GM12878 (cell line): ENCODE measurements at regions of chr7 and their contacts with region 1.

Region 1: GRCh38 chr7:128443831-128444600 is 11.7 kb upstream of the HILPDA start:
- DNase-seq: no peak
- ATAC-seq: peak; percentile 42
- H3K4me3 ChIP-seq: no peak overlapping the region
- H3K27ac ChIP-seq: no peak overlapping the region
- H3K4me1 ChIP-seq: peaks cover 9% of the 10 kb centered on the region; the same call in 1 of the 2 replicates
- H3K27me3 ChIP-seq: no peaks in the 10 kb centered on the region
- CTCF ChIP-seq: no peak
- EP300 ChIP-seq: no peak
- POLR2A ChIP-seq: no peak
- RAD21 ChIP-seq: no peak

Region 2: DNA sequence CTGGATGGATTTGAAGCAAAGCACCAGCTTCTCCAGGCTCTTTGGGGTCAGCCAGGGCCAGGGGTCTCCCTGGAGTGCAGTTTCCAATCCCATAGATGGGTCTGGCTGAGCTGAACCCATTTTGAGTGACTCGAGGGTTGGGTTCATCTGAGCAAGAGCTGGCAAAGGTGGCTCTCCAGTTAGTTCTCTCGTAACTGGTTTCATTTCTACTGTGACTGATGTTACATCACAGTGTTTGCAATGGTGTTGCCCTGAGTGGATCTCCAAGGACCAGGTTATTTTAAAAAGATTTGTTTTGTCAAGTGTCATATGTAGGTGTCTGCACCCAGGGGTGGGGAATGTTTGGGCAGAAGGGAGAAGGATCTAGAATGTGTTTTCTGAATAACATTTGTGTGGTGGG is 188.7 kb before region 1 on chr7:
- CTCF ChIA-PET with region 1: no interaction called
- POLR2A ChIA-PET with region 1: no interaction called
- RAD21 ChIA-PET with region 1: no interaction called
- SMC1A ChIA-PET with region 1: no interaction called
- in situ Hi-C with region 1: no loop called
- intact Hi-C with region 1: no loop called
- DNase-seq: no peak
- ATAC-seq: no peak
- H3K4me3 ChIP-seq: no peak overlapping the region
- H3K27ac ChIP-seq: no peak overlapping the region
- H3K4me1 ChIP-seq: no peaks in the 10 kb centered on the region
- H3K27me3 ChIP-seq: no peaks in the 10 kb centered on the region; a peak in 1 of 4 replicates
- CTCF ChIP-seq: no peak
- EP300 ChIP-seq: no peak
- POLR2A ChIP-seq: no peak
- RAD21 ChIP-seq: no peak

Region 3: DNA sequence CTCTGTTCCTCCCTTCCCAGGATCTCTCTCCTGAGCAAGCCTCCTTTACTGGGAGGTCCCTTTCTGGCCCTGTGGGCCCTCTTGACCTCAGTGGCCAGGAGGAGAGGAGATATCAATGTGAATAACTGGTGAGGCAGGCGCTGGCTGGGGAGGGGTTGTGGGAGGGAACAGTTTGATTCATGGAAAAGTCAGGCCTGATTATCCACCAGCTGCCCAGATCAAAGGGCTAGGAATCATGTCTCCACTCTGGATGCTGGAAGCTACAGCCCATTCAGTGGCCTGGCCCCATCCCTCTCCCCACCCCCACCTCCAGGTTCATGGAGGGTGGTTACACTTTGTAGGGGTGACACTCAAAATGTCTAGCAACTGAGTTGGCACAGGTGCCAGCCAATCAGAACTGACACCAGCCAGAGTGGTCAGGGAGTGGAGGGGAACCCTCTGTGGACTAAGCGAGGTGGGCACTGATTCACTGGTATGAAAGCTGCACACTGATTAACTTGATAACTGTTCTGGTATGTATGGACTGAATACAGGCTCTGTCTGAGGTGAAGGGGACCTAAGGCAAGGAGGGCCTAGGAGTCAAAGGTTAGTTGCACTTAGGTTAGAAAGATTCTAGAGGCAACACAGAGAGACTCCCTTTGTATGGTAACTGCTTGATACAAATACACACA is 87.3 kb before region 1 on chr7:
- CTCF ChIA-PET with region 1: no interaction called
- POLR2A ChIA-PET with region 1: no interaction called
- RAD21 ChIA-PET with region 1: no interaction called
- SMC1A ChIA-PET with region 1: no interaction called
- in situ Hi-C with region 1: no loop called
- intact Hi-C with region 1: no loop called
- DNase-seq: no peak
- ATAC-seq: no peak
- H3K4me3 ChIP-seq: no peak overlapping the region
- H3K27ac ChIP-seq: no peak overlapping the region
- H3K4me1 ChIP-seq: no peaks in the 10 kb centered on the region
- H3K27me3 ChIP-seq: peaks cover 10 to 12% of the 10 kb centered on the region in 2 experiments
- CTCF ChIP-seq: no peak
- EP300 ChIP-seq: no peak
- POLR2A ChIP-seq: no peak
- RAD21 ChIP-seq: no peak

Region 4: DNA sequence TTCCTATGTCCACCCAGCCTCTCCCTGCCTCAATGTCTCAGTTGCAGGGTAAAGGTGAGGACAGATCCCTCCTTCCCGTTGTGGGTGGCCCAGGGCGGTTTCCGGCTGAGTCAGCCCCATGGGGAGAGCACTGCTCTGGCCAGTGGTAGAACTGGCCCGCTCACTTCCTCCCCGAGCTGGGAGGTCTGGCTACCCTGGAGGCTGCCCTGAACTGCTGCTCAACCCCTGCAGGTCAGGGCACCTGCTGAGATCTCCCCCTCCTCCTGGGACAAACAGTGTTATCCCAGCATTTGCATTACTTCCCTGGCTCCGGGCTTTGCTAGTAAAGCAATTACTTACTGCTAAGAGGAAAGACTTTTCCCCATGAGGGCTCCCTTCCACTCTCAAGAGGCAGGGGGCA is 12.8 kb before region 1 on chr7:
- CTCF ChIA-PET with region 1: interaction called, 227 read pairs
- POLR2A ChIA-PET with region 1: interaction called, 7 read pairs
- RAD21 ChIA-PET with region 1: interaction called, 15 read pairs
- SMC1A ChIA-PET with region 1: interaction called, 55 read pairs
- in situ Hi-C with region 1: no loop called
- intact Hi-C with region 1: no loop called
- DNase-seq: no peak
- ATAC-seq: peak; percentile 27; the same call in 2 of the 3 replicates
- H3K4me3 ChIP-seq: no peak overlapping the region
- H3K27ac ChIP-seq: no peak overlapping the region
- H3K4me1 ChIP-seq: no peaks in the 10 kb centered on the region
- H3K27me3 ChIP-seq: no peaks in the 10 kb centered on the region
- CTCF ChIP-seq: no peak
- EP300 ChIP-seq: no peak
- POLR2A ChIP-seq: no peak
- RAD21 ChIP-seq: no peak